ENCODE measurements at regions of chr3 and their contacts with region 1.

Region 1: DNA sequence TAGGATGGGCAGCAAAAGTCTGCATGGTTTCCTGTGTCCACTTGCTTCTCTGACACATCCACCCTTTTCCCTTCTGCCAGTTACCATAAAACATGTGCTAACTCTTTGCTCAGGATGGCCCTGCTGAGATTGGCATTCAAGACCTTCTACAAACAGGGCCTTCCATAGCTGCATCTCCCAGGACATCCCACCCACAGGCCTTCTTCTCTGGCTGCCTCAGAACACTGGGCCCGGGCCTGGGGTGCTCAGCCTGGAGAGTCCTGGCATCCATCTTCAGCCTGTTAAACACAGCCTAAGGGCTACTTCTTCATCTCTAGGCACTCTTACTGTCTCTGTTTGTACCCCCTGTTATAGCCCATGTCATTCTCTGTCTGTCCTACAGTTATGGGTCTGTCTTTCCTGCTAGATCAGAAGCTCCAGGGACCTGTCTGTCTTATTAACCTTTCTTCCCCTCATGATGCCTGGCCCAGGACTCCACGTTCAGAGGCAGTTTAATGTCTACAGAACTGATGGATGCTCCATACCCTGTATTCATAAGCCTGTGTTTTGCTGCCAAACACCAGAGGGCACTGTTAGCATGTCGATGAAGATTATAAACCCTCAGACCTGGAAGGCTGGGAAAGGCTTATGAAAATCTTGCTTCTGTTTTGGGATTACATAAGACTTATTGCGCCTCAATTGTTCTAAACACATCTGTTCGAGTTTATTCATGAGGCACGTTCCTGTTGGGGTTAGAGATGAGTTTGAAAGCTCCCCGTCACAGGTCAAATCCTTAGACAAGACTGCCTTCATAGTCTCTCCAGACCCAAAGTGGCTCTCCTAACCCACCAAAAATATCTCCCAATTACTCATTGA is 16.5 kb downstream of the SEMA3G start:
- DNase-seq: peak; percentile 55
- ATAC-seq: peak; percentile 71
- H3K4me3 Mint-ChIP-seq: no peak overlapping the region
- H3K27ac Mint-ChIP-seq: no peak overlapping the region
- H3K4me1 Mint-ChIP-seq: peaks cover 11% of the 10 kb centered on the region
- H3K27me3 Mint-ChIP-seq: peaks cover 2% of the 10 kb centered on the region

Region 2: GRCh38 chr3:51879937-51880336 is 548.4 kb before region 1 on chr3:
- CTCF ChIA-PET with region 1: no interaction called
- DNase-seq: no peak
- ATAC-seq: no peak
- H3K4me3 Mint-ChIP-seq: no peak overlapping the region
- H3K27ac Mint-ChIP-seq: no peak overlapping the region
- H3K4me1 Mint-ChIP-seq: no peaks in the 10 kb centered on the region
- H3K27me3 Mint-ChIP-seq: peaks cover 32% of the 10 kb centered on the region

Region 3: GRCh38 chr3:52346623-52347530 is 81.5 kb before region 1 on chr3:
- CTCF ChIA-PET with region 1: no interaction called
- DNase-seq: no peak
- ATAC-seq: no peak
- H3K4me3 Mint-ChIP-seq: no peak overlapping the region
- H3K27ac Mint-ChIP-seq: no peak overlapping the region
- H3K4me1 Mint-ChIP-seq: no peaks in the 10 kb centered on the region
- H3K27me3 Mint-ChIP-seq: no peaks in the 10 kb centered on the region

Region 4: GRCh38 chr3:52455283-52456168 is 27.1 kb after region 1 on chr3 and contains the start of gene NISCH:
- CTCF ChIA-PET with region 1: interaction called, 14 read pairs
- DNase-seq: peak; percentile 94
- ATAC-seq: peak; percentile 95
- H3K4me3 Mint-ChIP-seq: peak within 1 kb of the TSS; percentile 95
- H3K27ac Mint-ChIP-seq: peak within 1 kb of the TSS; percentile 94
- H3K4me1 Mint-ChIP-seq: peaks cover 41% of the 10 kb centered on the region
- H3K27me3 Mint-ChIP-seq: no peaks in the 10 kb centered on the region
- total RNA-seq, gene NISCH: 72.9 to 84.1 TPM